ENCODE measurements at regions of chr4 and their contacts with region 1.

Region 1: GRCh38 chr4:157220371-157220881 is at the start of gene GRIA2:
- DNase-seq: peak; percentile 53
- H3K4me3 ChIP-seq: peak within 1 kb of the TSS in 2 of 3 experiments; percentile 23 to 38
- H3K27ac ChIP-seq: no peak within 1 kb of the TSS
- H3K4me1 ChIP-seq: peaks cover 17% of the 10 kb centered on the region
- H3K27me3 ChIP-seq: peaks cover 31% of the 10 kb centered on the region
- CTCF ChIP-seq: no peak
- total RNA-seq, gene GRIA2: not detected

Region 2: DNA sequence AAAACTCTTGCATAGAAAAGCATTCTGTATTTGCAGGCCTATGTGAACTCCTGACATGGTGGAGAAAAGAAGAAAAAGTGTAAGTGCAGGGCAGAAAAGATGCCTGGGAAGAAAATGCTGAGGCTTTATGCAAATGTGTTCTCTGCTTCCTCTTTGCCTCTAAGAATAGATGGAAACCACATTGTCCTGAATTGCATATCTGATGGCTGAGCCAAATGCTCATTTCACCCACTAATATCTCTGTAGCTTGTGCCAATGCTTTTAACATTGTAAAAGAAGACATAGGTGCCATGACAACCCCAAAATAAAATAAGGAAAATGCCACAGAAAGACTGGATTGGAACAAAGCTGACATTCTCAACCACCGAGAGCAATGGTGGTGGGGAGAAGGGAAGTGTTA is 307.5 kb after region 1 on chr4:
- CTCF ChIA-PET with region 1: no interaction called
- dilution Hi-C with region 1: no loop called
- in situ Hi-C with region 1: no loop called
- intact Hi-C with region 1: no loop called
- DNase-seq: no peak
- H3K4me3 ChIP-seq: no peak overlapping the region
- H3K27ac ChIP-seq: no peak overlapping the region
- H3K4me1 ChIP-seq: no peaks in the 10 kb centered on the region
- H3K27me3 ChIP-seq: no peaks in the 10 kb centered on the region
- CTCF ChIP-seq: no peak

Region 3: GRCh38 chr4:157961229-157961990 is 741.0 kb after region 1 on chr4:
- CTCF ChIA-PET with region 1: no interaction called
- dilution Hi-C with region 1: no loop called
- in situ Hi-C with region 1: loop called in 1 of 2 experiments (anchors 25 kb)
- intact Hi-C with region 1: no loop called
- DNase-seq: no peak
- H3K4me3 ChIP-seq: no peak overlapping the region
- H3K27ac ChIP-seq: no peak overlapping the region
- H3K4me1 ChIP-seq: no peaks in the 10 kb centered on the region
- H3K27me3 ChIP-seq: peaks cover 4% of the 10 kb centered on the region
- CTCF ChIP-seq: no peak

Region 4: GRCh38 chr4:157978680-157979361 is 758.4 kb after region 1 on chr4:
- CTCF ChIA-PET with region 1: interaction called, 4 read pairs
- dilution Hi-C with region 1: no loop called
- in situ Hi-C with region 1: loop called (anchors 10 to 25 kb)
- intact Hi-C with region 1: loop called (anchors 1 kb)
- DNase-seq: peak; percentile 44
- H3K4me3 ChIP-seq: no peak overlapping the region
- H3K27ac ChIP-seq: no peak overlapping the region
- H3K4me1 ChIP-seq: no peaks in the 10 kb centered on the region
- H3K27me3 ChIP-seq: peaks cover 2% of the 10 kb centered on the region
- CTCF ChIP-seq: peak; percentile 81 to 85

Region 5: DNA sequence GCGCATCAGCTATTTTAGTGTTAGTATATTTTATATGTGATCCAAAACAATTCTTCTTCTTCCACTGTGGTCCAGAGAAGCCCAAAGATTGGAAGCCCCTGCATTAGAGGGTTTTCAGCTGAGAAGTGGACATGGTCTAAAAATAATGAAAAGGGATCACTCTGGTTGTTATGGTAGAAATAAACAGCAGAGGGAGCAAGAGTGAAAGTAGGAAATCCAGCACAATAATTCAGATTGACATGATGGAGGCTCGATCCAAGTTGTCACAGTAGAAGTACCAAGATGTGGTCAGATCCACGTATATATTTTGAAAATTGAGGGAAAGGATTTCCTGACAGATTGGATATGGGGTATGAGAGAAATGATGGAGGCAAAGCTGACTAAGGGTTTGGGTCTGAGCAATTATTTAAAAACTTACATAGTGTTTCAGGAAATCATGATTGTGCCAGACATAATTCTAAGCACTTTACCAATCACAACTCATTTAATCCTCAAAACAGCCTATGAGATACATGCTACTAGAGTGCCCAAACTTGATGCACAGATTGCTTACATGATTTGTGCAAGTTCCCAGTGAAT is 972.8 kb after region 1 on chr4:
- CTCF ChIA-PET with region 1: no interaction called
- dilution Hi-C with region 1: no loop called
- in situ Hi-C with region 1: loop called in 1 of 2 experiments (anchors 25 kb)
- intact Hi-C with region 1: no loop called
- DNase-seq: no peak
- H3K4me3 ChIP-seq: no peak overlapping the region
- H3K27ac ChIP-seq: no peak overlapping the region
- H3K4me1 ChIP-seq: no peaks in the 10 kb centered on the region
- H3K27me3 ChIP-seq: no peaks in the 10 kb centered on the region
- CTCF ChIP-seq: peak; percentile 57 to 69

Region 6: DNA sequence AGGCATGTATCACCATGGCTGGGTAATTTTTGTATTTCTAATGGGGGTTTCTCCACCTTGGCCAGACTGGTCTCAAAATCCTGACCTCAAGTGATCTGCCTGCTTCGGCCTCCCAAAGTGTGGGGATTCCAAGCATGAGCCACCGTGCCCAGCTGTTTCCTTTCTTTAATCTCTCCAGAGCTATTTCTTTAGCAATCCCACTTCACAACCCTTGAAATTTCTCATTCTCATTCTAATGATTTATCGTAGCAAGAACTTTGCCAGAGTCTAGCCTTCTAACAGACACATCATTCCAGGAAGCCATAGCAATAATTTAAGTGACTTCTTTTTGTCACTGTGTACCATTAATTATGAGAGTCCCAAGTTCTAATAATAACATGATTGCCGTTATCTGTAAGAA is 1369.9 kb after region 1 on chr4:
- CTCF ChIA-PET with region 1: no interaction called
- dilution Hi-C with region 1: no loop called
- in situ Hi-C with region 1: no loop called
- intact Hi-C with region 1: no loop called
- DNase-seq: no peak
- H3K4me3 ChIP-seq: no peak overlapping the region
- H3K27ac ChIP-seq: no peak overlapping the region
- H3K4me1 ChIP-seq: no peaks in the 10 kb centered on the region
- H3K27me3 ChIP-seq: no peaks in the 10 kb centered on the region
- CTCF ChIP-seq: no peak

Measured in mammary epithelial cell (primary cell).